MCF 10A (cell line): ENCODE measurements at regions of chr3 and their contacts with region 1.

Region 1: DNA sequence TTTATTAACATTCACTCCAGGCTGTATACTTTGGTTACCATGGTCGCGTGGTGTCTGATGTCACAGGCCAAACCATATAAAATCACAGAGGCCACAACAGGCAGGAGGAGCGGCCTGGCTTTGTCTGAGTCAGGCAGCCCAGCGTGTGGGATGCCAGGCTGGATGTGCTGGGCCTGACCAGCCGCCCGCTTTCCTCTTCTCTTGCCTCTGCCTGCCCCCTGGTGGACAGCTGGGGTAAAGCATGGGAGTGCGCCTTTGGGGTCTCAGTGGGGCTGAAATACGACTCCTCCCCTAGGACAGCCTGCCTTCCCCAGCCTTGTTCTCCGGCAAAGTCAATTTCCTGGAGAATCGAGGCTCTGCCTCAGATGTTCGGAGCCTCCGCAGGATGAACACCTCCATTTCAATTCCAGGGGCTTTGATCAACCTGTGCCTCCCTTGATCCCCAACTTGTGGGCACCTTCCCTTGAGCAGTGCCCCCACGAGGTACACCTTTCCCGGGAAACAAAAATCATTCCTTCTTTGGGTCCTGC is 78.2 kb downstream of the CCNL1 start:
- DNase-seq: peak; percentile 90
- H3K4me3 Mint-ChIP-seq: no peak overlapping the region
- H3K27ac Mint-ChIP-seq: peak overlapping the region; percentile 94
- H3K4me1 Mint-ChIP-seq: peaks cover 23% of the 10 kb centered on the region
- H3K27me3 Mint-ChIP-seq: no peaks in the 10 kb centered on the region
- CTCF ChIP-seq: peak; percentile 97

Region 2: DNA sequence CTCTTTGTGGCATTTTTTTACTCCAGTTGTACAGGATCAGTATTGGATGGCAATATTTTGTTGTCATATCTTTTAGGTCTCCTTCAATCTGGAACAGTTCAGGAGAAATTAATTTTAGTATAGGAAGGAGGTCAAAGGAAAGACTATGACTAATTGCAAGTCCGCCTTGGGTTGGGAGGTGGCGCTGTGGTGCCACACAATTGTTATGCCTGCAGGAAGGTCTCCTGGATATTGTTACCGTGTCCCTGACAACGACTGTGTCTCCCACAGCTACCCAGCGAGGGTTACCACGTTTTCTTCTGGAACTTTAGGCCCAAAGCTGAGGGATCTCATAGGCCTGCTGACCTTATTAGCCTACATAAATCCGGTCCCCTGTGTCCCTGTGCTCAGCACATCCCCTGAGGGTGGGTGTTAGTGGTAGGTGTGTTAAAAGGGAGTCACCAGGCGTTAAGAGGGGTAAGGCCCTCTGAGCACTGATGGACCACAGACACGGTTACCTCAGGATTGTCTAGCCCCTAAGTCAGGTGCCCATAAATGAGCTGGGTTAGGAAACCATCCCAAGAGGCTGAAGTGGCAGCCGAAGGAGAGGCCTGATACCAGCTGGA is 929.8 kb before region 1 on chr3:
- CTCF ChIA-PET with region 1: interaction called, 8 read pairs
- POLR2A ChIA-PET with region 1: no interaction called
- intact Hi-C with region 1: loop called (anchors 1 kb)
- DNase-seq: peak; percentile 69
- H3K4me3 Mint-ChIP-seq: no peak overlapping the region
- H3K27ac Mint-ChIP-seq: no peak overlapping the region
- H3K4me1 Mint-ChIP-seq: no peaks in the 10 kb centered on the region
- H3K27me3 Mint-ChIP-seq: no peaks in the 10 kb centered on the region
- CTCF ChIP-seq: peak; percentile 74

Region 3: GRCh38 chr3:156681002-156681401 is 400.7 kb before region 1 on chr3:
- CTCF ChIA-PET with region 1: interaction called, 184 read pairs
- POLR2A ChIA-PET with region 1: interaction called, 134 read pairs
- intact Hi-C with region 1: no loop called
- DNase-seq: peak; percentile 90
- H3K4me3 Mint-ChIP-seq: peak overlapping the region; percentile 43
- H3K27ac Mint-ChIP-seq: peak overlapping the region; percentile 91
- H3K4me1 Mint-ChIP-seq: peaks cover 56% of the 10 kb centered on the region
- H3K27me3 Mint-ChIP-seq: no peaks in the 10 kb centered on the region
- CTCF ChIP-seq: no peak

Region 4: DNA sequence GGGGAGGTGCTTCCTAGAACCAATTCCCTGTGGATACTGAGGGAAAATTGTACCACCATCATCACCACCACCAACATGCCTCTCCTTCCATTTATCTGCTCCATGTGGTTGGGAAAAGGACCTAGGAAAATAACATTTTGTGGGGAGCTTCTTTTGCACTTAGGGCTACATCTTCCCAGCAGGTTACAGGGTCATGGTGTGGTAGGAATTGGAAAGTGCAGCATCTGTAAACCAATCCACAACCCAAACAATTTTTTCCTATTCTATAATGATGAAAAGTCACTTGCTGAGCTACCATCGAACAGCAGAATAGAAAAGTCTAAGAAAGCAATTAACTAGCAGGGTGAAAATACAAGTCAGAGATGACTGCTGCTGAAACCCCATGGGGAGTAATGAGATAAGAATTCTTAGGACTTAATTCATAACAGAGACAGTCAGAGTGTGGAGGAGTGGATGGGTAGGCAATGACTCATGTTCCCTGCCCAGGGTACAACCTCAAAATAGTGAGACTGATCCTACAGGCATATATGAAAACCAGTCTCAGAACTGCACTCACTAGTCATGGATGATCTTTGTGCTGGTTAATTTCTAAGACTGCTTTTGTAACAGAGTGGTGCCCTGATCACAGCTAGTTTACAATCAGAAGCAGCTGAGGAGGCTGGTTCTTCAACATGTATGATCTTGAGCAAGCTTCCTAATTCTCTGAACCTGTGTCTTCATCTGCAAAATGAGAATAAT is 293.7 kb before region 1 on chr3:
- CTCF ChIA-PET with region 1: interaction called, 3 read pairs
- POLR2A ChIA-PET with region 1: interaction called, 4 read pairs
- intact Hi-C with region 1: loop called (anchors 10 kb)
- DNase-seq: peak; percentile 84
- H3K4me3 Mint-ChIP-seq: no peak overlapping the region
- H3K27ac Mint-ChIP-seq: peak overlapping the region; percentile 55
- H3K4me1 Mint-ChIP-seq: peaks cover 48% of the 10 kb centered on the region
- H3K27me3 Mint-ChIP-seq: no peaks in the 10 kb centered on the region
- CTCF ChIP-seq: no peak

Region 5: DNA sequence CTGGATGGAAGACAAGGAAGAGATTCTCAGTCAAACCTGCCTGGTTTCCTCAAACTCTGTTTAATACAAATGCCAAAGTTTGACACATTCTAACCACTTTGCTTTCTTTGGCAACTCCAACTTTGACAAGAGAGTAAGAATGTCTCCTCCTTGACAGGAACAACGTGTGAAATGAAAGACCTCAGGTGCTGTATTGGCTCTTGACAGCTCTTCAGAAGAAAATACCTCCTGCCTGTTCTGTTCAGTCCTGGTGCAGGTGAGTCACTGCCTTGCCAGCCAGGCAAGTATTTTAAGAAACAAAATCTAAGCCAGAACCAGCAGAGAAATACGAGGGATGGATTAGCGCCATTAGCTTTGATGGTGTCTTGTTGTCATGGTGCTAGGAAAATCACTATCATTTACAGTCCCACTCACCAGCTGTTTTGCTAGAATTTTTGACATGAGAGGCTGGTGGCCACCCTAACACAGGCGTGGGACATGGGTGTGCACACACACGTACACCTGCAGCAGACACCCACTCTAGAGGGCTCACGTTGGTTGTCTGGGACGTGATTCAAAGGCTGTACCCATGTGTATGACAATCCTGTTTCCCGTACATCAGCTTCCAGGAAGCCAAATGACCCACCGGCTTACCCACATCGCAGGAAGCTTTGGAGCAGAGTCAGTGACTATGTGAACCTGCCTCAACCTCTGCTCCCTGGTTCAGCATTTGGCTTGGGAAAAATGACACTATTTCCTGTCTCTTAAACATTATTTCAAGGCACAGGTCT is 17.8 kb after region 1 on chr3:
- CTCF ChIA-PET with region 1: interaction called, 7 read pairs
- POLR2A ChIA-PET with region 1: interaction called, 192 read pairs
- intact Hi-C with region 1: no loop called
- DNase-seq: peak; percentile 71
- H3K4me3 Mint-ChIP-seq: no peak overlapping the region
- H3K27ac Mint-ChIP-seq: peak overlapping the region; percentile 78
- H3K4me1 Mint-ChIP-seq: peaks cover 22% of the 10 kb centered on the region
- H3K27me3 Mint-ChIP-seq: no peaks in the 10 kb centered on the region
- CTCF ChIP-seq: no peak

Region 6: DNA sequence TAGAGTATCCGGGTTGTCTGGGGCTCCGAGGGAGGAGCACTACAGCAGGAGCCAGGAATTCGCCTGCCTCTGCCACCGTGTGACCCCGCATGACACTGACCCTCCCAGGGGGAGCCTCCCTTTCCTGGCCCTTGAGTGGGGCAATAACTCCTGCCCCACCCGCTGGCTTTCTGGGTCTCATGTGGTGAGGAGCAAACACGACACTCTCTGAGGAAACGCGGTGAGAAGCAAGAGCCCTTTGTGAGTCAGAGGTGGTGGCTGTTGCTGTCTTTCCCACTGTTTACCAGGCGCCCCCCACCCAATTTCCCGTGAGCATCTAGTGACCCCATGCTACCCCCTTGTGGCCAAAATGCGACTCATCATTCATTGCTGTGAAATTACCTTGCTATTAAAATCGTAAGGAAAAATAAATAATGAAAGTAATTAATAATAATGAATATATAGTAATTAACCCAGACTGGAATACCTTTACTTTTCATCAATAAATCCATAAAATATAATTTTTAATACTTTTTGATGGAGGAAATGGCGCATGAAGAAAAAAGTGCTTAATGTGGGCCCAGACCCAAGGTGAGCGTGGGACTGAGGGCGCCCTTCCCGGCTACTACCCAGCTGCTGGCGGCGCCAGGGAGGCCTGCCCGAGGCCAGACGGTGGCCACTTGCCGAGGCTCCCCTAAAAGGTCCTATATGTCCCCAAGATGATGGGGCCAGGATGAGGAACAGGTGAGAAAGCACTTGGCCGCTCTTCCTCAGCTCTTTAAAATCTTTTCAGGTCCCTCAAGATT is 48.9 kb after region 1 on chr3:
- CTCF ChIA-PET with region 1: interaction called, 260 read pairs
- POLR2A ChIA-PET with region 1: interaction called, 331 read pairs
- intact Hi-C with region 1: loop called (anchors 1 kb)
- DNase-seq: peak; percentile 80
- H3K4me3 Mint-ChIP-seq: peak overlapping the region; percentile 60
- H3K27ac Mint-ChIP-seq: peak overlapping the region; percentile 96
- H3K4me1 Mint-ChIP-seq: peaks cover 63% of the 10 kb centered on the region
- H3K27me3 Mint-ChIP-seq: no peaks in the 10 kb centered on the region
- CTCF ChIP-seq: peak; percentile 81

Region 7: GRCh38 chr3:157159762-157160657 is 78.3 kb after region 1 on chr3 and contains the start of gene CCNL1:
- CTCF ChIA-PET with region 1: interaction called, 5 read pairs
- POLR2A ChIA-PET with region 1: interaction called, 39 read pairs
- intact Hi-C with region 1: no loop called
- DNase-seq: peak; percentile 97
- H3K4me3 Mint-ChIP-seq: peak within 1 kb of the TSS; percentile 97
- H3K27ac Mint-ChIP-seq: peak within 1 kb of the TSS; percentile 100
- H3K4me1 Mint-ChIP-seq: peaks cover 19% of the 10 kb centered on the region
- H3K27me3 Mint-ChIP-seq: no peaks in the 10 kb centered on the region
- CTCF ChIP-seq: no peak
- total RNA-seq, gene CCNL1: 103 and 112 TPM in 2 replicates